ENCODE measurements at regions of chr19 and their contacts with region 1.

Region 1: GRCh38 chr19:51016798-51017683 is 2.5 kb downstream of the KLK10 start:
- DNase-seq: peak; percentile 50
- ATAC-seq: peak; percentile 51
- H3K4me3 Mint-ChIP-seq: no peak overlapping the region
- H3K27ac Mint-ChIP-seq: no peak overlapping the region
- H3K4me1 Mint-ChIP-seq: peaks cover 21% of the 10 kb centered on the region
- H3K27me3 Mint-ChIP-seq: peaks cover 51% of the 10 kb centered on the region

Region 2: DNA sequence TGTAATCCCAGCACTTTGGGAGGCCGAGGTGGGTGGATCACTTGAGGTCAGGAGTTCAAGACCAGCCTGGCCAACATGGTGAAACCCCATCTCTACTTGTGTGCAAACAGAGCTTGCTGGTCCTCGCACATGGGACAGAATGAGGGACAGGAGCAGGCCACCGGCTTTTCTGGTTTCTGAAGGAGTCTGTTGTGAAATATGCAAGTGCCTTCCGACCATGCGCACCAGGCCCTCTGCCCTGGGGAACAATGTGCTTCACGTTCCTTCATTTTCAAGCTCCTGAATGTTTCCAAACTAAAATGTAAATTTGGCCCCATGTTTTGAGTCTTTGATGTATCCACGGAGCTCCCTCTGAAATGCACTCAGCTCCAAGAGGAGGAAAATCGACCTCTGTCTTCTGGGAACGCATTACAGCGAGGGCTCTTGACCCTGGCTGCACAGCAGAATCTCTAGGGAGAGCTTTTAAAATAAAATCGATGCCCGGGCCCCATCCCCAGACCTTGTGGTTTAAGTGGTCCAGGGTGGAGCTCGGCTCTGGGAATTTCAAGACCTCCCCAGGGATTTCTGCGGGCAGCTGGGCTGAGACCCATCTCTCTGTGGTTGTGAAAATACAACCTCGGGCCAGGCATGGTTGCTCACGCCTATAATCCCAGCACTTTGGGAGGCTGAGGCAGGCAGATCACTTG is 236.1 kb before region 1 on chr19:
- CTCF ChIA-PET with region 1: no interaction called
- DNase-seq: no peak
- ATAC-seq: no peak
- H3K4me3 Mint-ChIP-seq: no peak overlapping the region
- H3K27ac Mint-ChIP-seq: no peak overlapping the region
- H3K4me1 Mint-ChIP-seq: peaks cover 5% of the 10 kb centered on the region
- H3K27me3 Mint-ChIP-seq: peaks cover 51% of the 10 kb centered on the region

Region 3: DNA sequence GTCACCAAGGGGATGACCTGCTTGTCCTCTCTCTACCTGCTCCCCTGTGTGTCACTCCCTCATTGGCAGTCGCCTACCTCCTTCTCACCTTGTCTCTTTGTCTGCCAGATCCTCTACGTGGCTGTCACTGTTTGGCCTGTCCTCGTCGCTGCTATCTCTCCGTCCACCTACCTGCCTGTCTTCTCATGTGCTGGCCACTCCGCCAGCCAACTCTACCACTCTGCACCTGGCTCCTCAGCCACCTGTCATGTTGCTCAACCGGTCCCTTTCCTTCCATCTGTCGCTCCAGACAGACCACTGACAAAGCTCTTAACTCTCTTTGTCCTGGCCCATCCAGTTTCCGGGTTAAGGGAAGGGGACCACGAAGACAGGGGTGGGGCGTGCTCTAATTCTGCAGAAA is 17.7 kb after region 1 on chr19 and contains the start of gene KLK12:
- CTCF ChIA-PET with region 1: no interaction called
- DNase-seq: no peak
- ATAC-seq: no peak
- H3K4me3 Mint-ChIP-seq: no peak within 1 kb of the TSS
- H3K27ac Mint-ChIP-seq: no peak within 1 kb of the TSS
- H3K4me1 Mint-ChIP-seq: no peaks in the 10 kb centered on the region
- H3K27me3 Mint-ChIP-seq: peaks cover 2% of the 10 kb centered on the region
- total RNA-seq, gene KLK12: not detected

Region 4: DNA sequence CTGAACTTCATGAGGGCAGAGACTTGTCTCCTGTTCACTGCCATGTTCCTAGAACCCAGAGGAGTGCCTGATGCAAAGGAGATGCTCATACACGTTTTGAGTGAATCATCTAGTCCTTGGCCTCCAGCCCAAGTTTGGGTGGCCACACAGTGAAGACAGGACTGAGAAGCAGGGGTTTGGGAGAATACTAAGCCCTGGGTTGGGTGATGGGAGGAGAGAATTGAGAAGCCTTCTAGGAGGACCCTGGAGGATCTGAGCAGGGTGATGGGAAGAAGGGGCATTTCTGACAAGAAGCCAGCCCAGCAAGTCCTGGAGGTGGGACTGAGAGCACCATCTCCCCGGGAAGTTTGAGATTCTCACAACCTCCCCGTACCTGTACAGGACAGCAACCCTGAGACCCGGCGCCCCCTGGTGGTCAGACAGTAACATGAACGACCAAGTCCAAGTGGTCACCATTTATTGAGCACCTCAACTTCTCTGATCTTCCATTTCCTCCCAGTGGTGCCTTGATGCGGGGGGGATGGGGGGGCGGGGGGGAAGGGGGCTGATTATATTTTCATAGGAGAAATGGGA is 80.2 kb after region 1 on chr19:
- CTCF ChIA-PET with region 1: interaction called, 19 read pairs
- DNase-seq: peak; percentile 78
- ATAC-seq: peak; percentile 72
- H3K4me3 Mint-ChIP-seq: no peak overlapping the region
- H3K27ac Mint-ChIP-seq: peak overlapping the region; percentile 10
- H3K4me1 Mint-ChIP-seq: peaks cover 15% of the 10 kb centered on the region
- H3K27me3 Mint-ChIP-seq: no peaks in the 10 kb centered on the region